Right cardiac atrium (tissue), 5 donors: ENCODE measurements at regions of chr7 and their contacts with region 1.

Region 1: GRCh38 chr7:43590862-43591550 is 8.1 kb downstream of the STK17A start:
- DNase-seq: no peak
- ATAC-seq: no peak
- H3K4me3 ChIP-seq: no peak overlapping the region
- H3K27ac ChIP-seq: no peak overlapping the region
- H3K4me1 ChIP-seq: no peaks in the 10 kb centered on the region
- H3K27me3 ChIP-seq: no peaks in the 10 kb centered on the region

Region 2: GRCh38 chr7:43631559-43631958 is 40.6 kb after region 1 on chr7:
- intact Hi-C with region 1: loop called in 1 of 4 experiments (anchors 5 kb)
- DNase-seq: no peak
- ATAC-seq: no peak
- H3K4me3 ChIP-seq: no peak overlapping the region
- H3K27ac ChIP-seq: no peak overlapping the region
- H3K4me1 ChIP-seq: no peaks in the 10 kb centered on the region
- H3K27me3 ChIP-seq: no peaks in the 10 kb centered on the region

Region 3: GRCh38 chr7:43834463-43835251 is 243.7 kb after region 1 on chr7:
- intact Hi-C with region 1: no loop called
- DNase-seq: no peak
- ATAC-seq: peak in 1 of 2 donors; percentile 15
- H3K4me3 ChIP-seq: no peak overlapping the region
- H3K27ac ChIP-seq: no peak overlapping the region
- H3K4me1 ChIP-seq: no peaks in the 10 kb centered on the region
- H3K27me3 ChIP-seq: no peaks in the 10 kb centered on the region